HepG2 (cell line): ENCODE measurements at regions of chr20 and their contacts with region 1.

Region 1: DNA sequence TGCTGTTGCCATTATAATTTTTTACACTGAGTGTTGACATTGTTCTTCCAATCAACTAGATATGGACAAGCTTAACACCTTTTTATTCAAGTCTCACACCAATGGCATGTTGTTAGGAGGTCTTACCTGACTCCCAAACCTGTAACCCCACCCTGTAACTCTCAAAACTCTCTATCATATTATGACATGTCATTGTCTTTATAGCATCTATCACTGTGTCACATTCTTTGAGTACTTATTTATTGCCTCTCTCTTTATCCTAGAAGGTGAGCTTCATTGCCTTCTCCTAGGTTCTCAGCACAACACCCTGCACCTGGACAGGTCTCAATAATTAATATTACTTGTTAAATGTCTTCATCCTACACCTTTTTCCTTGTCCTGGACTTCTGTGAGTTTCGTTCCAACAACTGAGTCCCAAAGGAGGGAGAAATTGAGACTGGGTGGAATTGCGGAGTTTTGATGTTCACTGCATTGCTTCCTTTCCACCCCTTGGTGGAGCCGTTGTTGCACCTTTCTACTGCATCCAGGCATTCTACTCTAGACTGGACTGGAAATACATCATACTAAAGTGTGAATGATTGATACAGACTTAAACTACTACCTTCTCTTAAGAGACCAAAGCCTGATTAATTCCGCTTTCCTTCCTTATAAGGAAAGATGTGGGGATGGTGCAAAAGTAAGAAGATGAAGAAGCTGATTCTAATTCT is 338.0 kb upstream of the CHD6 start:
- DNase-seq: peak; percentile 39
- ATAC-seq: peak; percentile 93
- H3K4me3 ChIP-seq: no peak overlapping the region
- H3K27ac ChIP-seq: no peak overlapping the region
- H3K4me1 ChIP-seq: no peaks in the 10 kb centered on the region
- H3K27me3 ChIP-seq: no peaks in the 10 kb centered on the region
- CTCF ChIP-seq: peak; percentile 91
- EP300 ChIP-seq: no peak
- POLR2A ChIP-seq: no peak
- RAD21 ChIP-seq: peak; percentile 87

Region 2: DNA sequence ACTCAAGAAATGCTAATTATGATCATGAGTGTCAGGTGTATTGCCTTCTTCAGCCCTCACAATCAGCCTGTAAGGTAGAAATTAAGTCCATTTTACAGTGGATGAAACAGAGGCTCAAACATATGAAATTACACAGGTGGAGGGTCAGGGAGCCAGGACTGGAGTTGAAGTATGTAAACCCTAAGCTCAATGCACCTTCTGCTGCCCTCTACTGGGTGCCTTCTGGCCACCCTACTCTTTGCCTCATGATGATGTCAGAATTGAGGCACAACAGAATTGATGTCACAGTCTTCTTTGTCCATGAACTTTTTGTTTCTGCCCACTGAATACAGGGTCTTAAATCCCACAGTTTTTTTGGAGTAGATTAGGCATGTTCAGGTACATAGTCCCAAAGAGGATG is 62.8 kb after region 1 on chr20:
- CTCF ChIA-PET with region 1: no interaction called
- POLR2A ChIA-PET with region 1: no interaction called
- in situ Hi-C with region 1: no loop called
- intact Hi-C with region 1: loop called (anchors 2 kb)
- DNase-seq: peak; percentile 22
- ATAC-seq: peak; percentile 76
- H3K4me3 ChIP-seq: no peak overlapping the region
- H3K27ac ChIP-seq: no peak overlapping the region
- H3K4me1 ChIP-seq: no peaks in the 10 kb centered on the region
- H3K27me3 ChIP-seq: no peaks in the 10 kb centered on the region
- CTCF ChIP-seq: peak; percentile 38
- EP300 ChIP-seq: no peak
- POLR2A ChIP-seq: no peak
- RAD21 ChIP-seq: no peak

Region 3: DNA sequence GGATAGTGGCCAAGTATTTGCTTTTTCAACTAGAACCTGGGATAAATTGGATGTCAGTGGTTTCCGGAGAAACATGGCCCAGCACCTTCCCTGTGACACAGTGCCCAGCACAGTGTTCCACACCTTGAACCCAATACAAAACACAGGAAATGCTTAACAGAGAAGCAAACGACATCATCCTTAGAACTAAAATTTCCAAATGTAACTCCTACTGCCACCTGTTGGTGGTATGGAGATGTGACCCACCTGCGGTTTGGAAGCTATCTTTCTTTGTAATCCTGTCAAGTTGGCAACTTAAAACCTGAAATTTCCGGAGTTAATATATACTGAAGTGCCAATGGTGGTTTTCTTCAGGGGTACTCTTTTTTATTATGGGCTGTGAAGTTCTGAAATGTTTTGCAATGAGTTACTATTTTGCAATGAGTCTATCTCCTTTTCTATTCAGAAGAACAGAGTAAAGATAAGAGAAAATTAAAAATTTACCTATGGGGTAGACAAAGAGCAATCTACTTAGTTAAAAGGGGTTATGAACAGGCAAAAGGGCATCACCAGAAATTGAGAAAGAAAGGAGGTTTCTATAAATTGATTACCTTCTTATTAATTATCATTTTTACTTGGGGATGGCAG is 574.8 kb after region 1 on chr20:
- CTCF ChIA-PET with region 1: interaction called, 19 read pairs
- POLR2A ChIA-PET with region 1: no interaction called
- in situ Hi-C with region 1: loop called (anchors 10 kb)
- intact Hi-C with region 1: no loop called
- DNase-seq: peak; percentile 35
- ATAC-seq: peak; percentile 72
- H3K4me3 ChIP-seq: no peak overlapping the region
- H3K27ac ChIP-seq: no peak overlapping the region
- H3K4me1 ChIP-seq: no peaks in the 10 kb centered on the region
- H3K27me3 ChIP-seq: no peaks in the 10 kb centered on the region
- CTCF ChIP-seq: peak; percentile 74
- EP300 ChIP-seq: no peak
- POLR2A ChIP-seq: no peak
- RAD21 ChIP-seq: no peak

Region 4: GRCh38 chr20:43187476-43188233 is 1231.5 kb after region 1 on chr20:
- CTCF ChIA-PET with region 1: interaction called, 30 read pairs
- POLR2A ChIA-PET with region 1: no interaction called
- in situ Hi-C with region 1: loop called (anchors 5 kb)
- intact Hi-C with region 1: no loop called
- DNase-seq: peak; percentile 57
- ATAC-seq: peak; percentile 63
- H3K4me3 ChIP-seq: no peak overlapping the region
- H3K27ac ChIP-seq: no peak overlapping the region
- H3K4me1 ChIP-seq: no peaks in the 10 kb centered on the region
- H3K27me3 ChIP-seq: peaks cover 9 to 53% of the 10 kb centered on the region in 2 experiments; a peak in 3 of 5 replicates
- CTCF ChIP-seq: peak; percentile 91
- EP300 ChIP-seq: no peak
- POLR2A ChIP-seq: no peak
- RAD21 ChIP-seq: peak; percentile 88

Region 5: DNA sequence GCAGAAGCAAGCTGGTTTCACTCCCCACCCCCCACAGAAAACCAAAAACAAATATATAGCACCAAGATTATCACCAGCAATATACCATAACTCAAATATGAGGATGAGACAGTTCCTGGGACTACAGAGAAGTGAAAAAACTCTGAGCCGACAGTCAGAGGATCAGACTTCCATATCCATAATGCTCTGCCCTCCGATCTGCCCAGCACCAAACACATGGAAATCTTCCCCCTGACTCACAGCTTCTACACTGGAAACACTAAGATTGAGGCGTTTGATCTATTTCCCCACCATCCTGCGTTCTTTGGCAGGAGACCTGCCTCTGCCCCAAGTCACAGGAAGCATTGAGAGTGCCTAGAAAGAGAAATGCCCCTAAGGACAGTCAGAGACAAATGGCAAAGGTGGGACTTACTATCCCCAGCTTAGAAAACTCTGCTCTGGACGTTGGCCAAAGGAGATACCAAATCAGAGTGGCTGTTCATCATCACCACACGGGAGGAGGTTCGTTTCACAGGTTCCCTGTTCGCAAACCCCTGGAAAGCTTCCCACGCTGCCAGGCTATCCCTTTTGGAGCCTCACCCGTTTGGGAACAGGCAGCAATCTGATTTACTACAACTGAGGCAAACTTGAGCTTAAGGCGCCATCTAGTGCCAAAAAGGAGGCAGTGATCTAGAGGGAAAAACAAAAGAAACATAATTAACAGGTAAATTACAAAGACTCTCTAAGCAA is 1452.9 kb after region 1 on chr20:
- CTCF ChIA-PET with region 1: no interaction called
- POLR2A ChIA-PET with region 1: no interaction called
- in situ Hi-C with region 1: loop called (anchors 10 kb)
- intact Hi-C with region 1: no loop called
- DNase-seq: peak; percentile 50
- ATAC-seq: peak; percentile 88
- H3K4me3 ChIP-seq: no peak overlapping the region
- H3K27ac ChIP-seq: no peak overlapping the region
- H3K4me1 ChIP-seq: no peaks in the 10 kb centered on the region
- H3K27me3 ChIP-seq: no peaks in the 10 kb centered on the region; a peak in 1 of 5 replicates
- CTCF ChIP-seq: peak; percentile 92
- EP300 ChIP-seq: no peak
- POLR2A ChIP-seq: no peak
- RAD21 ChIP-seq: peak; percentile 75